ENCODE measurements at regions of chr22 and their contacts with region 1.

Region 1: GRCh38 chr22:41891407-41891806 is 23.5 kb downstream of the SHISA8 start:
- DNase-seq: no peak

Region 2: GRCh38 chr22:40044102-40044869 is 1847.1 kb before region 1 on chr22:
- intact Hi-C with region 1: no loop called
- DNase-seq: peak; percentile 99

Region 3: GRCh38 chr22:41816181-41816621 is 75.2 kb before region 1 on chr22:
- intact Hi-C with region 1: no loop called
- DNase-seq: no peak

Region 4: GRCh38 chr22:41915035-41915785 is 23.8 kb after region 1 on chr22 and contains the start of gene SHISA8:
- intact Hi-C with region 1: loop called in 1 of 2 experiments (anchors 1 kb)
- DNase-seq: no peak
- total RNA-seq, gene SHISA8: not detected

Measured in posterior vena cava (tissue), 2 donors.